BJ (cell line): ENCODE measurements at regions of chr18 and their contacts with region 1.

Region 1: GRCh38 chr18:25062720-25063119 is 289.2 kb downstream of the ZNF521 start:
- DNase-seq: no peak
- H3K4me3 ChIP-seq: no peak overlapping the region
- H3K27me3 ChIP-seq: no peaks in the 10 kb centered on the region
- CTCF ChIP-seq: no peak

Region 2: GRCh38 chr18:25133879-25134278 is 71.2 kb after region 1 on chr18:
- CTCF ChIA-PET with region 1: no interaction called
- POLR2A ChIA-PET with region 1: no interaction called
- DNase-seq: no peak
- H3K4me3 ChIP-seq: no peak overlapping the region
- H3K27me3 ChIP-seq: no peaks in the 10 kb centered on the region
- CTCF ChIP-seq: no peak

Region 3: DNA sequence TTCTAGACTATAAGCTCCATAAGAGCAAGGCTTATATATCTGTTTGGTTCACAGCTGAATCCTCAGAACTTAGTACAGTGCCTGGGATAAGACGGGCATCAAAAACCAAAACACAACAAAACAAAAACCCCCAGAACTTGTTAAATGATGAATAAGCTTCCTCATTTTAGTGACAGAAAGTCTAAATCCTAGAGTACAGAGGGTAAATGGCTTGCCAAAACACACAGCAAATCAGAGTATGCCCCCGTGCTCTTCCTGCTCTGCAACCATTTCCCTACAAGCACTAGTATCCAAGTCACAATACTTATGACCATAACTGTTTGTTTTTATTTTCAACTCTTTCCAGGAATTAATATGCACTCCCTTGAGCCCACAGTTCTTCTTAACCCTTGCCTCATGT is 279.1 kb after region 1 on chr18:
- CTCF ChIA-PET with region 1: no interaction called
- POLR2A ChIA-PET with region 1: interaction called, 10 read pairs
- DNase-seq: no peak
- H3K4me3 ChIP-seq: no peak overlapping the region
- H3K27me3 ChIP-seq: no peaks in the 10 kb centered on the region
- CTCF ChIP-seq: no peak